Cardiac septum (tissue), 1 donor: ENCODE measurements at regions of chr3 and their contacts with region 1.

Region 1: GRCh38 chr3:105868742-105869530 is at the start of gene CBLB:
- DNase-seq: peak; percentile 96
- total RNA-seq, gene CBLB: 38.6 TPM

Region 2: GRCh38 chr3:105686278-105686897 is 182.5 kb before region 1 on chr3:
- intact Hi-C with region 1: loop called (anchors 5 kb)
- DNase-seq: no peak

Region 3: GRCh38 chr3:105747060-105747541 is 121.8 kb before region 1 on chr3:
- intact Hi-C with region 1: loop called (anchors 5 kb)
- DNase-seq: no peak

Region 4: GRCh38 chr3:105791919-105792786 is 76.8 kb before region 1 on chr3:
- intact Hi-C with region 1: loop called (anchors 5 kb)
- DNase-seq: no peak

Region 5: DNA sequence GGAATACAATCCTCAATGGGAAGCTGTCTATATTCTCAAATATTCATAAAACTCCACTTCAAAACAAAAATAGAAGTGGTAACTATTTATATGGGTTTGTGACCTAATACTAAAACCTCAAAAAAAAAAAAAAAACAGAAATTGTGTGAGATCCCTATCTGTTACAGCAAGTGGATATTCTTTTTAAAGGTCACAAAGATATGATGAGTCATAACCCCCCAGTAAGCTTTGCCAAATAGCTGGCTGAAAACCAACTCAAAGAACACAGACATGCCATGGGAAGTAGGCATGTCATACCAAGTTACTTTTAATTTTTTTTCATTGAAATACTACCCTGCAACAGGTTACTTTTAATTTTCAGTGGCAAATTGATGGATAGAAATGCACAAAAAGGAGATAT is 62.6 kb before region 1 on chr3:
- intact Hi-C with region 1: loop called (anchors 5 kb)
- DNase-seq: no peak

Region 6: DNA sequence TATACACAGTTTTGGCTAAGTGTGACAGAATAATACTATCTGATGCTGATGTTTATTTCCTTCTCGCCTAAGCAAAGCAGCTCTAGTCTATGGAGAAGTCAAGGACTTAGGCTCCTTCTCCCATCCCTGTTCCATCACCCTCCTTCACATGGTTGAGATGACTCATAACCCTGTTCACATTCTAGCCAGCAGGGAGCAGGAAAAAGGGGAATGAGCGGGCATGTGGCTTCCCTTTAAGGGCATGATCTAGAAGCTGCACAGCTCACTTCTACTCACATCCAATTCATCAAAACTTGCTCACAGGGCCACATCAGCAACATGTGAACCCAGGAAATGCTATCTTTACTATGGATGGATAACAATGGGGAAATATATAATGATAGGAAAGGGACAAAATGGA is 41.0 kb before region 1 on chr3:
- intact Hi-C with region 1: loop called (anchors 5 kb)
- DNase-seq: no peak

Region 7: DNA sequence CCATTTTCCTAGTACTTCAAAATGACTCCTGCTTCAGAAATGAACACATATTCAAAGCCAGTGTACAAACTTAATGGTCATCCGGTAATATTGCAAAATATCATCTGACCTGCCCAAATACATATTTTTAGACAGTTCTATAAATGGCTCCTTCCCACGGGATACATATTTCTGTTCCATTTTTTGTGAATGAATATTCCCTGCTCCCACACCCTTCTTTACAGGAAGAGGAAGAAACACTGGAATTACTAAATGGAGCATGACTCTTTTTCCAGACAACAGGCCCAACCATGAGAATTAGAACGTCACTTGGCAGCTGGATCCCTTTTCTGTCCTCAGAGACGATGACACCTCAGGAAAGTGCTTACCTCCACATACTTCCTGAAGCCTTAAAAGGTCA is 37.9 kb after region 1 on chr3:
- intact Hi-C with region 1: loop called (anchors 2 kb)
- DNase-seq: no peak